ENCODE measurements at regions of chr2 and their contacts with region 1.

Region 1: GRCh38 chr2:12120281-12121150 is 374.1 kb downstream of the LPIN1 start:
- DNase-seq: no peak
- ATAC-seq: no peak
- H3K4me3 ChIP-seq: no peak overlapping the region
- H3K4me3 Mint-ChIP-seq: no peak overlapping the region
- H3K27ac ChIP-seq: no peak overlapping the region
- H3K27ac Mint-ChIP-seq: no peak overlapping the region
- H3K4me1 ChIP-seq: peaks cover 7% of the 10 kb centered on the region
- H3K4me1 Mint-ChIP-seq: no peaks in the 10 kb centered on the region
- H3K27me3 ChIP-seq: no peaks in the 10 kb centered on the region
- H3K27me3 Mint-ChIP-seq: no peaks in the 10 kb centered on the region
- CTCF ChIP-seq: no peak

Region 2: DNA sequence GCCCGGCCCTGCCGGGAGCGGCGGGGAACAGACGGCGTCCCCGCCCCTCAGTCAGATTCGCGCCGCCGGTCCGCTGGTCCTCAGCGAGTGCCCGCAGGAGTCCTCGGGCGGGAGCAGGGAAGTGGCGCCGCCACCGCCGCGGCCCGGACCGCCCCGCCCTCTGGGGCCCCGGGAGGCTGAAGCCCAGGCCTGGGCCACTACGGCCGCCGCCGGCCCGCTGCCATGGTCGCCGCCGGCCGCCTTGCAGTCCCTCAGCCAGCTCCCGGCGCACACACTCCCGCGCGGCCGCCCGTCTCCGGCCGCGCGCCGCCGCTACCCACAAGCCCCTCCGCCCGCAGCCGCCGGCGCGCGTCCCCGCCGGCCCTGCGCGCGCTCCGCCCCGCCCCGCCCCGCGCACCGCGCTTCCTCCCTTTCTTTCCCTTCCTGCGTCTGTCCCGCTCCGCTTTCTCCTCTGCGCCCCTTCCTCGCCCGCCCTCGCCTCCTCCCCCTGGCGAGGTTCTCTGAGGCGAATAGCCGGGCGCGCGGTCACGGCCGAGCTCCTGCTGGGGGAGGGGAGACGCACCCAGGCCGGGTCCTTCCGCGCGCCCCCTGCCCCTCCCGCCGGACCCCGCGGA is 776.1 kb before region 1 on chr2 and contains the start of gene ROCK2:
- CTCF ChIA-PET with region 1: no interaction called
- POLR2A ChIA-PET with region 1: no interaction called
- intact Hi-C with region 1: loop called in 1 of 2 experiments (anchors 10 kb)
- DNase-seq: peak; percentile 42 to 83 (median 59)
- ATAC-seq: peak; percentile 68
- H3K4me3 ChIP-seq: peak within 1 kb of the TSS; percentile 88
- H3K4me3 Mint-ChIP-seq: peak within 1 kb of the TSS; percentile 98
- H3K27ac ChIP-seq: peak within 1 kb of the TSS; percentile 7 to 42
- H3K27ac Mint-ChIP-seq: peak within 1 kb of the TSS; percentile 88
- H3K4me1 ChIP-seq: peaks cover 16% of the 10 kb centered on the region
- H3K4me1 Mint-ChIP-seq: peaks cover 44% of the 10 kb centered on the region
- H3K27me3 ChIP-seq: no peaks in the 10 kb centered on the region
- H3K27me3 Mint-ChIP-seq: no peaks in the 10 kb centered on the region
- CTCF ChIP-seq: no peak
- total RNA-seq, gene ROCK2: 6.9 to 9.4 TPM

Region 3: DNA sequence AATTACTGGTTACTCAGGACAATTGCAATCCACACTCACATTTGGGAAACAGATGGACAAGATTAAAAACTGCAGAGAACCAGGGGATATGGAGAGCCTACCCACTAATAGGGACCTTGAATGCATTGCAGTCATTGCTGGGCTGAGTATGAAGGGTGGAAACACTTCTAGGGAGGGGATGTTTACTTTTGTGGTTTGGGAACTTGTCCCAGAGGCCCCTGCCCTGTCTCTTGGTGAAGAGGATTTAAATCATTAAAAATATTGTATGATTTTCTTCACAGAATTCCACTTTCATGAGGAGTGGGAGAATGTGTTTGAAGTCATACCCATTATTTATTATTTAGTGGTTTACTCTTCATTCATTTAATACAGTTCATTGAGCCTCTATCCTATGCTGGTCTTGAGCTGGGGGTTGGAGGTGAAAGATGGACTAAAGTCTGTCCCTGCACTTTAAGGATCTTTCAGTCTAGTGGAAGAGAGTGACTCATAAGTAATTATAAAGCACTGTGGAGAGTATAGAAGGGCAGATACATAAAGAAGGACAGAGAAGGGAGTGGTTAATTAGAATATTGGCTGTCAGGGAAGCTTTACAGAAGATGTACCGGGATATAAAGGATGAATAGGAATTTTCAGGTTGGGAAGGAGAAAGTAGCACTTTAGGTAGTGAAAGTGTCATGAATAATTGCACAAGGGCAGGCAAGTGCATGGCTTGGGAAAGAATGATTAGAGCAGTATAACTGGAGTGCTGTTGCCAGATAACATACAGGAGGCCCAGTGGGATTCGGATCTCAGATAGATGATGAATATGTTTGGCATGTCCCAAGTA is 60.7 kb before region 1 on chr2:
- CTCF ChIA-PET with region 1: no interaction called
- POLR2A ChIA-PET with region 1: no interaction called
- intact Hi-C with region 1: no loop called
- DNase-seq: no peak
- ATAC-seq: no peak
- H3K4me3 ChIP-seq: no peak overlapping the region
- H3K4me3 Mint-ChIP-seq: no peak overlapping the region
- H3K27ac ChIP-seq: no peak overlapping the region
- H3K27ac Mint-ChIP-seq: no peak overlapping the region
- H3K4me1 ChIP-seq: peaks cover 18% of the 10 kb centered on the region
- H3K4me1 Mint-ChIP-seq: peaks cover 22% of the 10 kb centered on the region
- H3K27me3 ChIP-seq: no peaks in the 10 kb centered on the region
- H3K27me3 Mint-ChIP-seq: no peaks in the 10 kb centered on the region
- CTCF ChIP-seq: no peak